ENCODE measurements at regions of chr14 and their contacts with region 1.

Region 1: GRCh38 chr14:24299255-24300195 is at the starts of genes DHRS1 and NOP9:
- DNase-seq: peak; percentile 85 to 99 (median 92)

Region 2: DNA sequence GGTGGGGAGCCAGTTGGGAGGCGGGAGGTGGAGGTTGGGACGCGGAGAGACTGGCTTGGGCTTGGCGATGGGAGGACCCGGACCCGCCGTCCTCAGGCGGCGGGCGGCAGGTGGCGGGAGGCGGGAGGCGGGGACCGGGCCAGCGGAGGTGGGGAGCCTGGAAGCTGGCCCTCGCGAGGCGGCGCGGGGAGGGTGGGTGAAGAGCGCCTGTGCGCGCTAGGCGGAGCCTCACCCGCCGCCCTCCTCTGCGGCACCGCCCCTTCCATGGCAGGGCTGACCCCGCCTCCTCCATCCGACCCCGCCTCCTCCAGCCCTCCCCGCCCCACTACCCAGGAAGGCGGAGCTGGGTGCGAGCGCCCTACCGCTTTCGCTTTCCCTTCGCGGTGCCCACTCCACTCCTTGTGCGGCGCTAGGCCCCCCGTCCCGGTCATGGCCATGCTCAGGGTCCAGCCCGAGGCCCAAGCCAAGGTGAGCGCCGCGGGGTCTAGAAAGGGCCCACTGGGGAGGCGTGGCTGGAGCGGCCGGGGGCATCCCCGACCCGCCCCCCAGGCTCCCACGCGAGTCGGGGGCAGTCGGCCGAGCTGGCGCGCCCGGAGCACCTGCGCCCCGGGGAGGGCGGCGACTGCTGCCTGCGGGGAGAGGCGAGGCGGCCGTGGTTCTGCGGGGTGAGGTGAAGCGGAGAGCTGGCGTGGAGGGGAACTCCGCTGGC is 163.5 kb before region 1 on chr14 and contains the start of gene PSME1:
- intact Hi-C with region 1: no loop called
- DNase-seq: peak; percentile 87 to 99 (median 94)

Region 3: GRCh38 chr14:24195191-24196070 is 104.1 kb before region 1 on chr14 and contains the start of gene TM9SF1:
- intact Hi-C with region 1: no loop called
- DNase-seq: peak; percentile 69 to 98 (median 84)

Region 4: GRCh38 chr14:24241829-24242443 is 57.6 kb before region 1 on chr14:
- intact Hi-C with region 1: loop called (anchors 2 kb)
- DNase-seq: peak in 8 of 10 donors; percentile 83 to 98 (median 90)

Measured in posterior cingulate gyrus (tissue), 11 donors.